ENCODE measurements at regions of chr5 and their contacts with region 1.

Region 1: DNA sequence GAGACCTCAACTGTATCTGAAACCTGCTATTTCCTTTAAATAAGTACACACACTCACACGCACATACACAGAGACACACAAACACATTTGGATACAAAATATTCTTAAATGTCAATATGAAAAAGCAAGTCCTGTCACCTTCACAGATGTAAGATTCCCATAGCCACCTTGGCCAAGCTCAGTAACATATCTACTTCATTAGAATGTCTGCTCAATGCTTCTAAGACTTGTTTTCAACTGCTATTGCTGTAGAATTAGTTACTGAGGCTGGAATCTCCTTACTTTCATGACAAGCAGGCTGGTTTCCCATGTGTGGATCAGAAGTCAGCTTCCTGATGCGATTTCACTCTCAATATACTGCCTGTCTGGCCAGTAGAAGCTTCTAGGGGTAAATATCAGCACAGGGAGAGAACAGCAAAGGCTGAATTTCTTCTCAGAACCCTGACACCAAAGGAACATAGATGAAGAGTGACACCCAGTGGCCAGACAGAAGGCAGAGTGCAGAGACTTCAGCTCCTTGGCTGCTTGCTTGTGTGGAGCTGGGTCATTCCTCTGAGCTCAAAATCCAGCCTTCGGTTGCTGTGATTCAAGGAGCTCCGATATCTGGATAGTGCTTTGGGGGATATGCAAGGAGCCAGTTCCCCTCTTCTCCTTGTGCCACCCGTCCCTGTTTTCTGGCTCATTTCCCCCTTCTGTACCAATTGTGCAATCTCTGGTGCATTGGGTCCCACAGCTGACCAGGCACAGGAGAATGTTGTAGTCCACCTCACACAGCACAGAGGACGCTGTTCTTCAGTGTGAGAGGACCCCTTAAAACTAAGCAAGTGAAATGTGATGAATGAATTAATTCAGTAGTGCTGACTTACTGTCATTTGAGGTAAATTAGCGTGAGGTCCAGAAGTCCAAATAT is 26.6 kb upstream of the ABLIM3 start:
- DNase-seq: peak; percentile 59
- ATAC-seq: peak; percentile 99
- H3K4me3 Mint-ChIP-seq: no peak overlapping the region
- H3K27ac Mint-ChIP-seq: no peak overlapping the region
- H3K4me1 Mint-ChIP-seq: no peaks in the 10 kb centered on the region
- H3K27me3 Mint-ChIP-seq: no peaks in the 10 kb centered on the region; the same call in 1 of the 2 replicates
- CTCF ChIP-seq: peak; percentile 48

Region 2: DNA sequence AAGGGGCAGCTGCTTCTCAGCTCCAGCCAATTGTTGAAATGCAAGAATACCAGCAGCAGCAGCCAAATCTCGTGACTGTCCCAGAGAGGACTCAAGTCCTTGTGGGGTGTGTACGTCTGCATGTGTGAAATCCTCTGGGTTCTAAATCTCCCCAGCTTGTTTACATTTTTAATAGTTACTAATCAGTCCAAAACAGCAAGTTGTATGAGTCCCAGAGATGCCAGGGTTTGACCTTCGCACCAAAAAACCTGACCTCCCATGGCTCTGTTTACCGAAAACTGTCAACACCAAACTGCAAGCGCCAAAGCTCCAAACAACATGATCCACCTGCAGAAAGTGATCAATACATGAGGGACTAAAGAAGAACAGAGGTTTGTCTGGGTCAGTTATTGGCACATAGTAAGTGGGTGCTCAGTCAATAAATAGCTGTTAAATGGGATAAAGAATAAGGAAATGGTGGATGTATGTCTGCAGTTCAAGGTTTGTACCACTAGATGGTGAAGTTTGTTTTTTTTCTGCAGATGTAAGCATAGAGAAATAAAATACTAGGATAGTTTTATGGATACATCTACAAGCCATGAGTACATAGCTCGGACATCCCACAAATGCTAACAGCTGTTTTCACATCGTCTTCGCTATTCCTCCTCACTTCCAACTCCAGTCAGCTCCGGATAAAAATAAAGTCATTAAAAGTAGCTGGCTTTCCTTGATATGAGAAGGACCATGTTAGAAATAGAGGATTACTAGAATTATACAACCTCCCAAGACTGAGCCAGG is 373.5 kb before region 1 on chr5:
- CTCF ChIA-PET with region 1: interaction called, 66 read pairs
- POLR2A ChIA-PET with region 1: interaction called, 3 read pairs
- DNase-seq: no peak
- ATAC-seq: peak; percentile 64; the same call in 1 of the 2 replicates
- H3K4me3 Mint-ChIP-seq: no peak overlapping the region
- H3K27ac Mint-ChIP-seq: no peak overlapping the region
- H3K4me1 Mint-ChIP-seq: no peaks in the 10 kb centered on the region
- H3K27me3 Mint-ChIP-seq: no peaks in the 10 kb centered on the region; the same call in 1 of the 2 replicates
- CTCF ChIP-seq: peak; percentile 39; the same call in 1 of the 2 replicates

Region 3: GRCh38 chr5:148972958-148973357 is 141.7 kb before region 1 on chr5:
- CTCF ChIA-PET with region 1: interaction called, 13 read pairs
- POLR2A ChIA-PET with region 1: no interaction called
- DNase-seq: no peak
- ATAC-seq: no peak
- H3K4me3 Mint-ChIP-seq: no peak overlapping the region
- H3K27ac Mint-ChIP-seq: no peak overlapping the region
- H3K4me1 Mint-ChIP-seq: peaks cover 33% of the 10 kb centered on the region
- H3K27me3 Mint-ChIP-seq: no peaks in the 10 kb centered on the region
- CTCF ChIP-seq: no peak

Region 4: DNA sequence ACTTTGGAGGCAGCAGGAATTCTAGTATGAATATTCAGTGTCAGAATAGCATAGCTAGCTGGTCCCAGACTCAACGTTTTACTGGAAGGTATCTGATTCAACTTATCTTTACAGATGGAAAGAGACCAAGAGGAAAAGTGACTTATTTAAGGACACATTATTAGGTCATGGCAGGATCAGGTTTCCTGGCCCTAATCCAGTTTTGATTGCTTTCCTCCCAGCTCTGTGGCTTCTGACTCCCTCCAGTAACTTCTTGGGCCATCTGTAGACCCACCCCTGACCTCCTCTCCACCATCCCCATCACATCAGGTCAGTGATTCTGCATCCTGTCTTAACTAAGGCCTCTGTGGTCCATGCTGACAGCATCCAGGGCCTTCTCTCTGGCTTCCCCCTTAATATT is 90.2 kb before region 1 on chr5:
- CTCF ChIA-PET with region 1: interaction called, 14 read pairs
- POLR2A ChIA-PET with region 1: no interaction called
- DNase-seq: no peak
- ATAC-seq: no peak
- H3K4me3 Mint-ChIP-seq: no peak overlapping the region
- H3K27ac Mint-ChIP-seq: no peak overlapping the region
- H3K4me1 Mint-ChIP-seq: peaks cover 2% of the 10 kb centered on the region
- H3K27me3 Mint-ChIP-seq: no peaks in the 10 kb centered on the region; the same call in 1 of the 2 replicates
- CTCF ChIP-seq: no peak

Region 5: DNA sequence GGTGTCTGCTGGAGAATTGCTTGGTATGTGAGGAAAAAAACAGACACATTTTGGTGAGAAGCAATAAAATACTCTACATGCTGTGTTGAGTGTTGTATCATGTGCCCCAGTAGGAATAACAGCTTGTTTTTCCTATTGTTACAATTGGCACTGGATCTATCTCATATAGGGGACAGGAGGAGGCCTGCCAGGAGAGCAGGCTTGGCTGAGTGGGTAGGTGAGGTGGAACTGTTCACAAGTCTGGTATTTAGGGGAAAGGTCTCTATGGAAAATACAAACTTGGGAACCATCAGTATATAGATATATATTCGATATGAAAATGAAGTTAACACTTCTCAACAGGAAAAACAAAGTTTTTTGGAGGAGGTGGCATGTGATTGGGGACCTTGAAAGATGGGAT is 42.3 kb before region 1 on chr5:
- CTCF ChIA-PET with region 1: interaction called, 16 read pairs
- POLR2A ChIA-PET with region 1: no interaction called
- DNase-seq: no peak
- ATAC-seq: no peak
- H3K4me3 Mint-ChIP-seq: no peak overlapping the region
- H3K27ac Mint-ChIP-seq: no peak overlapping the region
- H3K4me1 Mint-ChIP-seq: peaks cover 3% of the 10 kb centered on the region
- H3K27me3 Mint-ChIP-seq: no peaks in the 10 kb centered on the region
- CTCF ChIP-seq: no peak

Region 6: DNA sequence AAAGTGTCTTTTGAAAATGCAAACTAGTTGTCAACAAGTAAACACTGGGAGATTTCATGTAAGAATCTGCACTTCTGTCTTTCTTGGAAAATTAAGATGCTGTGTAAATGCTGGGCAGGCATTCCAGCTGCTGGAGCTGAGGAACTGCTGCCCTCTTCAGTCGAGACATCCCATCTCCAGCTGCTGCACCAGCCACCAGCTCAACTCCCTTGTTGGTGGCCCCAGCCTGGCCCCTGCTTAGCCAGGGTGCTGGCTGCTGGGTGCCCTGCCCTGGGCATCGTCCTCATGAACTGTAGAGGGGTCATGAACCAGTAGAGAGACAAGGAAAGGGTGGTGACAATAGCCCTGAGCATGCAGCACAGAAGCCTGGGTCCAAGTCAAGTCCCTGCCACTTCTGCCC is 123.9 kb after region 1 on chr5:
- CTCF ChIA-PET with region 1: interaction called, 11 read pairs
- POLR2A ChIA-PET with region 1: no interaction called
- DNase-seq: no peak
- ATAC-seq: no peak; the same call in 1 of the 2 replicates
- H3K4me3 Mint-ChIP-seq: no peak overlapping the region
- H3K27ac Mint-ChIP-seq: no peak overlapping the region
- H3K4me1 Mint-ChIP-seq: peaks cover 3% of the 10 kb centered on the region; the same call in 1 of the 2 replicates
- H3K27me3 Mint-ChIP-seq: peaks cover 4% of the 10 kb centered on the region
- CTCF ChIP-seq: no peak

Measured in WTC11 (cell line).